ENCODE measurements at regions of chr2 and their contacts with region 1.

Region 1: GRCh38 chr2:47708801-47709499 is 74.0 kb upstream of the MSH6 start:
- DNase-seq: no peak
- H3K4me3 ChIP-seq: no peak overlapping the region
- H3K27ac ChIP-seq: no peak overlapping the region
- H3K4me1 ChIP-seq: no peaks in the 10 kb centered on the region
- H3K27me3 ChIP-seq: no peaks in the 10 kb centered on the region
- CTCF ChIP-seq: no peak
- POLR2A ChIP-seq: no peak

Region 2: GRCh38 chr2:47697000-47697601 is 11.8 kb before region 1 on chr2:
- CTCF ChIA-PET with region 1: interaction called, 4 read pairs
- POLR2A ChIA-PET with region 1: no interaction called
- dilution Hi-C with region 1: no loop called
- intact Hi-C with region 1: loop called (anchors 2 kb)
- DNase-seq: no peak
- H3K4me3 ChIP-seq: no peak overlapping the region
- H3K27ac ChIP-seq: no peak overlapping the region
- H3K4me1 ChIP-seq: peaks cover under 1% of the 10 kb centered on the region
- H3K27me3 ChIP-seq: peaks cover 6 to 16% of the 10 kb centered on the region in 2 experiments
- CTCF ChIP-seq: no peak
- POLR2A ChIP-seq: no peak